ENCODE measurements at regions of chr3 and their contacts with region 1.

Region 1: DNA sequence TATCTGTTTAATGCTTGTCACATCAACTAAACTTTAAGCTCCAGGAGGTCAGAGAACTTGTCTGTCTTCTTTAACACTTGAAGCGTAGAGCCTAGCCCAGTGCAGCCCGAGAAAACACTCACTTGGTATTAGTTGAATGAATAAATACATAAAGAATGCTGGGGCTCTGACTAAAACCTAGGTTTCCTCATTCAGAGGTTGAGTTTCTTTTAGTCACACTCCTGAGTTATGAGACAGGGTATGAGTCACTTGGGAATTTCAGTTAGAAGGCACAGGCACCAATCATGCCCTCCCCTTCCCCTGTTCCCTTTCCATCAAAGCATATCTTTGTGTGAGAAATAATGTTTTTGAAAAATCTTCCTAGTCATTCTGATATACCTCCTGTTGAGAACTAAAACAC is 589.8 kb upstream of the DPPA4 start:
- DNase-seq: peak; percentile 71 to 98
- H3K4me3 ChIP-seq: no peak overlapping the region
- H3K27ac ChIP-seq: peak overlapping the region; percentile 93
- H3K4me1 ChIP-seq: peaks cover 32% of the 10 kb centered on the region
- H3K27me3 ChIP-seq: no peaks in the 10 kb centered on the region
- CTCF ChIP-seq: no peak

Region 2: GRCh38 chr3:109731620-109732473 is 195.3 kb before region 1 on chr3:
- CTCF ChIA-PET with region 1: no interaction called
- POLR2A ChIA-PET with region 1: interaction called, 3 read pairs
- intact Hi-C with region 1: loop called (anchors 10 kb)
- DNase-seq: peak in 1 of 2 experiments; percentile 32
- H3K4me3 ChIP-seq: no peak overlapping the region
- H3K27ac ChIP-seq: no peak overlapping the region
- H3K4me1 ChIP-seq: no peaks in the 10 kb centered on the region
- H3K27me3 ChIP-seq: no peaks in the 10 kb centered on the region
- CTCF ChIP-seq: peak; percentile 100

Region 3: GRCh38 chr3:109806929-109807328 is 120.2 kb before region 1 on chr3:
- CTCF ChIA-PET with region 1: no interaction called
- POLR2A ChIA-PET with region 1: no interaction called
- intact Hi-C with region 1: loop called (anchors 5 kb)
- DNase-seq: peak in 1 of 2 experiments; percentile 53
- H3K4me3 ChIP-seq: no peak overlapping the region
- H3K27ac ChIP-seq: no peak overlapping the region
- H3K4me1 ChIP-seq: peaks cover 8% of the 10 kb centered on the region
- H3K27me3 ChIP-seq: no peaks in the 10 kb centered on the region
- CTCF ChIP-seq: no peak

Region 4: GRCh38 chr3:110413807-110414748 is 486.9 kb after region 1 on chr3:
- CTCF ChIA-PET with region 1: no interaction called
- POLR2A ChIA-PET with region 1: interaction called, 4 read pairs
- intact Hi-C with region 1: loop called (anchors 10 kb)
- DNase-seq: no peak
- H3K4me3 ChIP-seq: no peak overlapping the region
- H3K27ac ChIP-seq: no peak overlapping the region
- H3K4me1 ChIP-seq: no peaks in the 10 kb centered on the region
- H3K27me3 ChIP-seq: no peaks in the 10 kb centered on the region
- CTCF ChIP-seq: no peak